T-cell (primary cell): ENCODE measurements at regions of chr14 and their contacts with region 1.

Region 1: GRCh38 chr14:95515596-95516552 is 576 bp downstream of the SYNE3 start:
- DNase-seq: peak; percentile 61 to 92 (median 81)
- ATAC-seq: peak; percentile 78 to 92 (median 80)
- H3K4me3 ChIP-seq: peak overlapping the region; percentile 63 to 77
- H3K4me3 Mint-ChIP-seq: peak overlapping the region; percentile 84 to 90 (median 88)
- H3K27ac ChIP-seq: peak overlapping the region; percentile 76
- H3K27ac Mint-ChIP-seq: peak overlapping the region; percentile 91 to 92
- H3K4me1 ChIP-seq: peaks cover 31 to 70% of the 10 kb centered on the region in 2 experiments
- H3K4me1 Mint-ChIP-seq: peaks cover 67 to 77% (median 73%) of the 10 kb centered on the region in 3 donors
- H3K27me3 ChIP-seq: no peaks in the 10 kb centered on the region
- H3K27me3 Mint-ChIP-seq: no peaks in the 10 kb centered on the region

Region 2: GRCh38 chr14:95442633-95443021 is 73.2 kb before region 1 on chr14:
- CTCF ChIA-PET with region 1: interaction called in 1 of 2 experiments, 10 read pairs
- POLR2A ChIA-PET with region 1: no interaction called
- DNase-seq: peak; percentile 32 to 85 (median 67)
- ATAC-seq: peak; percentile 87 to 97 (median 94)
- H3K4me3 ChIP-seq: no peak overlapping the region
- H3K4me3 Mint-ChIP-seq: no peak overlapping the region
- H3K27ac ChIP-seq: no peak overlapping the region
- H3K27ac Mint-ChIP-seq: peak overlapping the region in 1 of 2 donors; percentile 44
- H3K4me1 ChIP-seq: peaks cover 0 to 6% of the 10 kb centered on the region in 2 experiments
- H3K4me1 Mint-ChIP-seq: peaks cover 4 to 7% (median 6%) of the 10 kb centered on the region in 3 donors
- H3K27me3 ChIP-seq: no peaks in the 10 kb centered on the region
- H3K27me3 Mint-ChIP-seq: no peaks in the 10 kb centered on the region

Region 3: GRCh38 chr14:95774265-95775160 is 258.6 kb after region 1 on chr14:
- CTCF ChIA-PET with region 1: no interaction called
- POLR2A ChIA-PET with region 1: no interaction called
- DNase-seq: peak in 30 of 35 experiments; percentile 4 to 69 (median 22)
- ATAC-seq: no peak
- H3K4me3 ChIP-seq: no peak overlapping the region
- H3K4me3 Mint-ChIP-seq: no peak overlapping the region
- H3K27ac ChIP-seq: no peak overlapping the region
- H3K27ac Mint-ChIP-seq: no peak overlapping the region
- H3K4me1 ChIP-seq: peaks cover 0 to 2% of the 10 kb centered on the region in 2 experiments
- H3K4me1 Mint-ChIP-seq: peaks cover 0 to 6% (median 2%) of the 10 kb centered on the region in 3 donors
- H3K27me3 ChIP-seq: peaks cover 0 to 12% of the 10 kb centered on the region in 2 experiments
- H3K27me3 Mint-ChIP-seq: peaks cover 23 to 28% of the 10 kb centered on the region in 2 donors